B cell (primary cell): ENCODE measurements at regions of chr2 and their contacts with region 1.

Region 1: GRCh38 chr2:134295441-134295840 is 41.6 kb downstream of the MGAT5 start:
- DNase-seq: no peak
- ATAC-seq: no peak
- H3K4me3 ChIP-seq: no peak overlapping the region
- H3K4me3 Mint-ChIP-seq: peak overlapping the region; percentile 46
- H3K27ac ChIP-seq: peak overlapping the region; percentile 85 to 95
- H3K27ac Mint-ChIP-seq: peak overlapping the region; percentile 84
- H3K4me1 ChIP-seq: peaks cover 77 to 88% of the 10 kb centered on the region in 2 donors
- H3K4me1 Mint-ChIP-seq: peaks cover 56% of the 10 kb centered on the region
- H3K27me3 ChIP-seq: no peaks in the 10 kb centered on the region
- H3K27me3 Mint-ChIP-seq: no peaks in the 10 kb centered on the region
- CTCF ChIP-seq: no peak

Region 2: GRCh38 chr2:134261398-134262131 is 33.9 kb before region 1 on chr2:
- CTCF ChIA-PET with region 1: interaction called, 9 read pairs
- POLR2A ChIA-PET with region 1: interaction called, 3 read pairs
- intact Hi-C with region 1: loop called (anchors 5 kb)
- DNase-seq: peak; percentile 78
- ATAC-seq: peak; percentile 55
- H3K4me3 ChIP-seq: peak overlapping the region in 1 of 5 experiments; percentile 22
- H3K4me3 Mint-ChIP-seq: peak overlapping the region; percentile 80
- H3K27ac ChIP-seq: peak overlapping the region; percentile 94 to 96
- H3K27ac Mint-ChIP-seq: peak overlapping the region; percentile 99
- H3K4me1 ChIP-seq: peaks cover 92 to 94% of the 10 kb centered on the region in 2 donors
- H3K4me1 Mint-ChIP-seq: peaks cover 86% of the 10 kb centered on the region
- H3K27me3 ChIP-seq: no peaks in the 10 kb centered on the region
- H3K27me3 Mint-ChIP-seq: no peaks in the 10 kb centered on the region
- CTCF ChIP-seq: no peak

Region 3: GRCh38 chr2:134331081-134331480 is 35.6 kb after region 1 on chr2:
- CTCF ChIA-PET with region 1: no interaction called
- POLR2A ChIA-PET with region 1: no interaction called
- intact Hi-C with region 1: no loop called
- DNase-seq: no peak
- ATAC-seq: no peak
- H3K4me3 ChIP-seq: no peak overlapping the region
- H3K4me3 Mint-ChIP-seq: no peak overlapping the region
- H3K27ac ChIP-seq: peak overlapping the region in 1 of 2 donors; percentile 11
- H3K27ac Mint-ChIP-seq: peak overlapping the region; percentile 46
- H3K4me1 ChIP-seq: peaks cover 31 to 32% of the 10 kb centered on the region in 2 donors
- H3K4me1 Mint-ChIP-seq: peaks cover 57% of the 10 kb centered on the region
- H3K27me3 ChIP-seq: no peaks in the 10 kb centered on the region
- H3K27me3 Mint-ChIP-seq: no peaks in the 10 kb centered on the region
- CTCF ChIP-seq: no peak